ENCODE measurements at regions of chr9 and their contacts with region 1.

Region 1: DNA sequence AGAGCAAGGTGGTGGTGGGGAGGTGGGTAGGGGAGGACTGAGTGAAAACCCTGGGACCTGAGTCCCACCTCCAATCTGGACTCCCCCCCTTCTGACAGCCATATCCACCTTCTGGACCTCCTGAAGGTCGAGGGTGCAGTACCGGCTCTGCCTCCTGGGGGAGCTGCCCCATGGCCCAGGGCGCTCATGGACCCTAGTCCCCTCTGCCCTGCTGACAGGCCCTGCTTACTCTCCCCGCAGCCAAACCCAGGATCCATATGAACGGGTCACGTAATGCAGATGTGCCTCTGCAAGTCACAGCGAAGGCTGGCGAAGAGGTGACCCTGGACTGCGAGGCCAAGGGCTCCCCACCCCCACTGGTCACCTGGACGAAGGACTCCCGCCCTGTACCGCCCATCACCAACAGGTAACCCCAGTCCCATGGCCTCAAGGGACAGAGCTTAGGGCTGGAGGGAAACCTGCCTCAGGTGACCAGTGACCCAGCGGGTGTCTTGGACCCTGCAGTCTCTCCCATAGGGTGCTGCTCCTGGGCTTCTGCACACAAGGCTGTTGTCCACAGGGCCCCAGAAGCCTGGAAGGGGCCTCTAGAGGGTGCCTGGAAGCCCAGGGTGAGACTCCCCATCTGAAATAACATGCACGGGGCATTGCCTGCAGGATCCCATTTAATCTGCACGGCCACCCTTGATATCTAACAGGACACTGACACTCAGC is 61.7 kb downstream of the HMCN2 start:
- DNase-seq: no peak
- H3K4me3 ChIP-seq: no peak overlapping the region
- H3K27ac ChIP-seq: peak overlapping the region; percentile 78 to 92 (median 85)
- H3K4me1 ChIP-seq: peaks cover 10 to 41% (median 22%) of the 10 kb centered on the region in 4 donors
- H3K27me3 ChIP-seq: peaks cover 20% of the 10 kb centered on the region
- CTCF ChIP-seq: peak; percentile 23 to 39 (median 32)
- EP300 ChIP-seq: no peak
- POLR2A ChIP-seq: no peak

Region 2: DNA sequence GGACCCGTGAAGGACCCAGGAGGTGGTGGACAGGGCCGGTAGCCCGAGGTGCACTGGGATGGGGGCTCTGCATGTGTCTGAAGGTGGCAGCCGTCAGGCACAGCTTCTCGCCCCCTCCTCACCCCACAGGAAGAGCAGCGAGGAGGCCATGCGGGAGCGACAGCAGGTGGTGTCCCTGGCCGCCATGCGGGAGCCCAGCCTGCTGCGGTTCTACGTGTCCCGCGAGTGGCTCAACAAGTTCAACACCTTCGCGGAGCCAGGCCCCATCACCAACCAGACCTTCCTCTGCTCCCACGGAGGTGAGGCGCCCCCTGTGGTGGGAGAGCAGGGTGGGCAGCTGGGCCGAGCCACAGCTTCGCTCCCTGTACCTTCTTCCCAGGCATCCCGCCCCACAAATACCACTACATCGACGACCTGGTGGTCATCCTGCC is 452.0 kb before region 1 on chr9:
- in situ Hi-C with region 1: no loop called
- intact Hi-C with region 1: loop called (anchors 10 kb)
- DNase-seq: no peak
- H3K4me3 ChIP-seq: no peak overlapping the region
- H3K27ac ChIP-seq: no peak overlapping the region
- H3K4me1 ChIP-seq: no peaks in the 10 kb centered on the region
- H3K27me3 ChIP-seq: no peaks in the 10 kb centered on the region
- CTCF ChIP-seq: no peak
- EP300 ChIP-seq: no peak
- POLR2A ChIP-seq: no peak

Region 3: DNA sequence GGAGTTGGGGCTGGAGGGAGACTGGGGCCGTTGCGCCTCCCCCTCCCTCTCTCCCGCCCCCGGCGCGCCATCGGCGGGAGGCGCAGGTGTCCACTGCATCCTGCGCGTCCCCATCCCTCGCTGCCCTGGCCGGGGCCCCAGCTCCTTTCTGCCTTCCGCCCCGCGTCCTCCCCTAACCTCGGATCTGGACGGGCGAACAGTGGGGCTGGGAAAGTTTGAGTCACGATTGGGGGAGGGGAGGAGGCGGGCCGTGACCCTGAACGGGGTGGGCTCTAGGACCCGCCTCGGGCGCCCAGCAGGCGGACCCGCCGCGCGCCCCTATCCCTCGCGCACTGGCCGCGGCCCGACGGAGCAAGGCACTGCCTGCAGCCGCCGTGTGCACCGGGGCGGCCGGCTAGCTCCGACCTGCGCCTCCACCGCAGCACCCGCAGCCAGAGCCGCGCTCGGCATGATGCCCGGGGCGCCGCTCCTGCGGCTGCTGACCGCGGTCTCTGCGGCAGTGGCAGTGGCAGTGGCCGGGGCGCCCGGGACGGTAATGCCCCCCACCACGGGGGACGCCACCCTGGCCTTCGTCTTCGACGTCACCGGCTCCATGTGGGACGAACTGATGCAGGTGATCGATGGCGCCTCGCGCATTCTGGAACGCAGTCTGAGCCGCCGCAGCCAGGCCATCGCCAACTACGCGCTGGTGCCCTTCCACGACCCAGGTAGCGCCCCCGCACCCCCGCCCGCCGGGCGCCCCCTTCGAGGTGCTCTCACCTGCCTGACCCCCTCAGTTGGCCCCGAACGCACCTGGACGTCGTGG is 61.6 kb before region 1 on chr9 and contains the start of gene HMCN2:
- in situ Hi-C with region 1: no loop called
- intact Hi-C with region 1: loop called (anchors 10 kb)
- DNase-seq: no peak
- H3K4me3 ChIP-seq: peak within 1 kb of the TSS; percentile 20 to 42 (median 29)
- H3K27ac ChIP-seq: peak within 1 kb of the TSS; percentile 52 to 89 (median 82)
- H3K4me1 ChIP-seq: peaks cover 3 to 32% (median 12%) of the 10 kb centered on the region in 4 donors
- H3K27me3 ChIP-seq: peaks cover 62% of the 10 kb centered on the region
- CTCF ChIP-seq: no peak
- EP300 ChIP-seq: no peak
- POLR2A ChIP-seq: no peak
- total RNA-seq, gene HMCN2: 7.8 to 40.0 (median 15.2) TPM

Region 4: DNA sequence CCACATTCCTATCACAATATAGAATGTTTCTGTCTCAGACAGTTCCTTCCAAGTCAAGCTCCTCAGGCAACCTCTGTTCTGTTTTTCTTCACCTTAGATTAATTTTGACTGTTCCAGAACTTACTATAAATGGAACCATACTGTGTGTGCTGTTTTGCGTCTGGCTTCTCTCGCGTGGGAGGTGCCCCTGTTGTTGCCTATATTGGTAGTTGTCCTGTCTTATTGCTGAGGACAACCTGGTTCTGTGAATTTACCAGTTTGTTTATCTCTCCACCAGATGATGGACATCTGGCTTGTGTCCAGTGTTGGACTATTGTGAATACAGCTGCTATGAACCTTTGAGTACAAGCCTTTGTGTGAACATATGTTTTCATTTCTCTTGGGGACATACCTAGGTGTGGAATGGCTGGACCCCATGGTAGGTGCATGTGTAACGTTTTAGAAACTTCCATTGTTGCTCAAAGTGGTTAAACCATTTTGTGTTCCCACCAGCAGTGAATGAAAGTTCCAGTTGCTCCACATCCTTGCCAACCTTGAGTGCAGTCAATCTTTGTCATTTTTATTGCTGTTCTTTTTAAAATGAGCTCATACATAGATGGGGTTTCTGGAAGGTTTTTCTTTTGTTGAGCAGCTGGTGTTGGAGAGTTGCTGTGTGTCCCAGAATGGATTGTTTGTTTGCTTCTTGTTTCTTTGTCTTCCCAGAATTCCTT is 43.5 kb before region 1 on chr9:
- in situ Hi-C with region 1: no loop called
- intact Hi-C with region 1: loop called (anchors 5 kb)
- DNase-seq: no peak
- H3K4me3 ChIP-seq: no peak overlapping the region
- H3K27ac ChIP-seq: peak overlapping the region; percentile 60 to 89 (median 78)
- H3K4me1 ChIP-seq: peaks cover 8 to 38% (median 15%) of the 10 kb centered on the region in 4 donors
- H3K27me3 ChIP-seq: peaks cover 10% of the 10 kb centered on the region
- CTCF ChIP-seq: no peak
- EP300 ChIP-seq: peak; percentile 49
- POLR2A ChIP-seq: no peak

Region 5: DNA sequence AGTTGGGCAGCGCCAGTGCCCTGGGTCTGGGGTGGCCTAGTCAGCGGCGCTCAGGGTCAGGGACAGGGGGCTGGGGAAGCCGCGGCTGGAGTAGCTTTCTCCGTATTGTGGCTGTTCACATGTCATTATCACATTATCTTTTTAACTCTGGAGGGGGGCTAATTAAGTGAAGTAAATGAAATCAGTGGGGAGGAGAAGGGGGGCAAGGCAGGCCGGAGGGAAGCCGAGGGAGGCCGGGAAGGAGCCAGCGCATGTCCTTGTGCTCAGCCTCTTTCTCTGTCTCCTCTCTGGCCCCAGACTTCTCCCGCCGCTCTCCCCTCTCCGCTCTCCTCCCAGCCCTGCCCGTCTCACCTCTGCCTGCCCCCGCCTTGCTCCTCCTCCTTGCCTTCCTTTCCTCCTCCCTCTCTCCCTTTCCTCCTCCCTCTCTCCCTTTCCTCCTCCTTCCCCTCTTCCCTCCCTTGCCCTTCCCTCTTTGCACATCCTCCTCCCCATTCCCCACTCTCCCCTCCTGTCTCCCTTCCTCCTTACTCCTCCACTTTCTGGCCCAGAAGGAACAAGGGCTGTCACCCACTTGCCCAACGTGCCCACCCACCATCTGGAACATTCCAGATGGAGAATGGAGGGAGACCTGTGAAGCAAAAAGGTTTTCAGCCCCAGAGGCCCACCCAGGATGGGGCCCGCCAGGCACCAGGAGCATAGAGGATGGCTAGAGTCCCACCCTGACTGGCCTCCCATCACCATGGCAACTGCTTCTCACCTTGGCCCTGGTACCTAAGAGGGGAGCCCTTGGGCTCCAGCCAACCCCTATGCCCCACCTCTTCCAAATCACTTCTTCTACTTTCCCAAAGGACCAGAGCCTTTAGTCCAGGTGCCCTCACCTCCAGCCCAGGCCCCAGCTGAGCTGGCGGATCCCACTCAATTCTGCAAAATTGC is 156.4 kb after region 1 on chr9:
- in situ Hi-C with region 1: no loop called
- intact Hi-C with region 1: no loop called
- DNase-seq: no peak
- H3K4me3 ChIP-seq: no peak overlapping the region
- H3K27ac ChIP-seq: no peak overlapping the region
- H3K4me1 ChIP-seq: no peaks in the 10 kb centered on the region
- H3K27me3 ChIP-seq: no peaks in the 10 kb centered on the region
- CTCF ChIP-seq: no peak
- EP300 ChIP-seq: no peak
- POLR2A ChIP-seq: no peak

Measured in transverse colon (tissue), 4 donors.